AG04449 (cell line): ENCODE measurements at regions of chr6 and their contacts with region 1.

Region 1: DNA sequence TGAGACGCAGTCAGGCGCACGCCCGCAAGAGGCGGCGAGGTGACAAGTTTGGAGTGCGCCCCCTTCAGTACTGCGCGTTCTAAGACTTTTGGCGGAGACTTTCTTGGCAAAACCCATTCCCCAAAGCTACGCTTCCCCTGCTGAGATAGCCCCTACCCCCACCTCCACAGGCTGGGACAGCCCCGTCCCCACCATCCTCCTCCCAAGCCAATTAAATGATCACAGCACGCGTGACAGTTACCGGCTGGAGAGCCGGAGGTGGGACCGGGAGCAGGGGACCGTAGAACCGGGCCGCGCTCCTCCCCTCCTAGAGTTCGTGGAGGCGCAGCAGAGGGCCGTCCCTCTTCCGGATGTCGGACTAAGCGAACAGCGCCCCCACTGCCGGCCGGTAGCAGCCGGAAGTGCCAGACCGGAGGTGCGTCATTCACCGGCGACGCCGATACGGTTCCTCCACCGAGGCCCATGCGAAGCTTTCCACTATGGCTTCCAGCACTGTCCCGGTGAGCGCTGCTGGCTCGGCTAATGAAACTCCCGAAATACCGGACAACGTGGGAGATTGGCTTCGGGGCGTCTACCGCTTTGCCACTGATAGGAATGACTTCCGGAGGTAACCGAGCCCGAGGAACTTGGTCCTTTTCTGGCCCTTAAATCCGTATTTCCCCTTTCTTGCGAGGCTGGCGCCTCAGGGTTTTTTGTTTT is at the start of gene TOMM6:
- DNase-seq: peak; percentile 47
- H3K4me3 ChIP-seq: peak within 1 kb of the TSS; percentile 99
- CTCF ChIP-seq: peak; percentile 94

Region 2: DNA sequence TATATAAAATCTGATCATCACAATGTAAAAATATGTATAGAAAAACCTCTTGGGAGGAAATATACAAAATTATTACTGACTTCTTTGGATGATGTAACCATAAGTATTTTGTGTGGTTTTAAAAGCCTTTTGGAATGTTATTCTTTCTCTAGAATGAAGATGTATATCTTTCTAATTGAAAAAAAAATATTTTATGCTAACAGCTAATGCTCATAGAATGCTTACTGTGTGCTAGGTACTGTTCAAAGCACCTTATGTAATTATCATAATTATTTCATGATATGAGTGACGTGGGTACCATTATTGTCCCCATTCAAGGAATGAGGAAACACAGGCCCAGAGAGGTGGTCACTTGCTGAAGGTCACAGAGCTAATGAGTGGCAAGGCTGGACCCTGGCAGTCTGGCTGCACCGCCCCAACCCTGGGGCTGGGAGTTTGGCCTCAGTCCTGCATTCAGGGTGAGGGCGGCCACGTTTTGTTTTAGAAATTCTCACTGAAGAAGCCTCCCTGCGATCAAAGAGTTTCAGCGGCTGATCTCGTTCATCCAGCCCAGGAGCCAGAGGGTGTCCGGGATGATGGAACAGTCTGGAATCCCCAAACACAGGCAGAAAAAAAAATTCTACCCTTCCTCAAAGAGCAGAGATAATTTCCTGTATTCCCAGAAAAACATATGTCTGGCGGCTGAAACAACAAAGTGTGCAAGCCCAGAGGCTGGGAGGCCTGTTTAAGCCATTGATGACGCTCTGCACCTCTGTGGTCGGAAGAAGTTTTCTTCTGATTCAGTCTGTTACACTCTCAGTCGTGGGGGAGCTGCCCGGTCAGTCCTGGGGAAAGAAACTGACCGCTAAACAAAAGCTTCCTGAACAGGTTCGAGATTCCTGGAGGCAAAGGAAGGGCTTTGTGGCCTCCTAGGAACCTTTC is 89.2 kb before region 1 on chr6:
- CTCF ChIA-PET with region 1: interaction called, 15 read pairs
- POLR2A ChIA-PET with region 1: no interaction called
- DNase-seq: peak; percentile 95
- H3K4me3 ChIP-seq: peak overlapping the region; percentile 13
- CTCF ChIP-seq: no peak

Region 3: DNA sequence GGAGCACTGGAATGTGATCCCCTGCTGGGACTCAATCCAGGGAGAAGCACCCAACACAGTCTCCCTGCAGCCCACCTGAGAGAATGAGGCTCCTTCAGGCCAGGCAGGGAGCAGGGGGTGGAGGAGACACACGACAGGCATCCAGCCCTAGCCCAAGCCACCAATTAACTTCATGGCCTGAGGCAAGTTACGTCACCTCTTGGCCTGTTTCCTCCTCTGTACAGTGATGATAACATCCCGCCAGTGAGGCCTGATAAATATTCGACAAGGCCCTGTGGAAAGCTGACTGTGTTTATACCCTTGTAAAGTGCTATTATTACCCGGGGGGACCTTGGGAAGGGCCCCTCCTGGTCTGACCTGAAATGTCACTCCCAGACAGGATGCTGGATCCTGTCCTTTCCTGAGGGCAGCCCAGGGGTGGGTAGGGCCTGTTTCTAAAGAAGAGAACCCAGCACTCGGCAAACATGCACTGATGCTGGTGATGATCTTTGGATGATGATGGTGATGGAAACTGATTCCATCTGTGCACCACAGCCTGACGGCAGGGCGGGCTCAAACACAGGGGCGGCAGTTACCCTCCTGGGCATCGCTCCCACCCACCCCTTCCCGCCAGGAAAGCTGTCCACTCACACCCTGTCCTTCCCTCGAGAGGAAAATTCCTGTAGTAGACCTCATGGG is 20.1 kb before region 1 on chr6:
- CTCF ChIA-PET with region 1: interaction called, 31 read pairs
- POLR2A ChIA-PET with region 1: no interaction called
- DNase-seq: peak; percentile 24
- H3K4me3 ChIP-seq: no peak overlapping the region
- CTCF ChIP-seq: no peak

Region 4: GRCh38 chr6:41818271-41819054 is 31.1 kb after region 1 on chr6:
- CTCF ChIA-PET with region 1: interaction called, 46 read pairs
- POLR2A ChIA-PET with region 1: no interaction called
- DNase-seq: no peak
- H3K4me3 ChIP-seq: no peak overlapping the region
- CTCF ChIP-seq: no peak

Region 5: GRCh38 chr6:41920921-41921711 is 133.7 kb after region 1 on chr6 and contains the starts of genes BYSL and MED20:
- CTCF ChIA-PET with region 1: interaction called, 96 read pairs
- POLR2A ChIA-PET with region 1: interaction called, 8 read pairs
- DNase-seq: peak; percentile 71
- H3K4me3 ChIP-seq: peak within 1 kb of the TSS; percentile 98
- CTCF ChIP-seq: peak; percentile 94

Region 6: GRCh38 chr6:42028234-42029061 is 241.1 kb after region 1 on chr6:
- CTCF ChIA-PET with region 1: interaction called, 11 read pairs
- POLR2A ChIA-PET with region 1: no interaction called
- DNase-seq: no peak
- H3K4me3 ChIP-seq: no peak overlapping the region
- CTCF ChIP-seq: no peak